Activated CD8-positive, alpha-beta T cell treated with anti-CD3 and anti-CD28 coated beads, Interleukin-2, amount 10 ng/mL, durations not matched to agents 7 days and 5 days (primary cell): ENCODE measurements at regions of chr1 and their contacts with region 1.

Region 1: GRCh38 chr1:198937231-198938031 is 298.6 kb downstream of the PTPRC start:
- DNase-seq: peak; percentile 82
- ATAC-seq: peak; percentile 92
- H3K4me3 Mint-ChIP-seq: no peak overlapping the region
- H3K27ac Mint-ChIP-seq: peak overlapping the region; percentile 88
- H3K4me1 Mint-ChIP-seq: peaks cover 21% of the 10 kb centered on the region
- H3K27me3 Mint-ChIP-seq: no peaks in the 10 kb centered on the region

Region 2: GRCh38 chr1:198919667-198920398 is 17.6 kb before region 1 on chr1:
- CTCF ChIA-PET with region 1: interaction called, 12 read pairs
- POLR2A ChIA-PET with region 1: interaction called, 24 read pairs
- DNase-seq: no peak
- ATAC-seq: peak; percentile 71
- H3K4me3 Mint-ChIP-seq: peak overlapping the region; percentile 60
- H3K27ac Mint-ChIP-seq: peak overlapping the region; percentile 79
- H3K4me1 Mint-ChIP-seq: peaks cover 81% of the 10 kb centered on the region
- H3K27me3 Mint-ChIP-seq: no peaks in the 10 kb centered on the region

Region 3: DNA sequence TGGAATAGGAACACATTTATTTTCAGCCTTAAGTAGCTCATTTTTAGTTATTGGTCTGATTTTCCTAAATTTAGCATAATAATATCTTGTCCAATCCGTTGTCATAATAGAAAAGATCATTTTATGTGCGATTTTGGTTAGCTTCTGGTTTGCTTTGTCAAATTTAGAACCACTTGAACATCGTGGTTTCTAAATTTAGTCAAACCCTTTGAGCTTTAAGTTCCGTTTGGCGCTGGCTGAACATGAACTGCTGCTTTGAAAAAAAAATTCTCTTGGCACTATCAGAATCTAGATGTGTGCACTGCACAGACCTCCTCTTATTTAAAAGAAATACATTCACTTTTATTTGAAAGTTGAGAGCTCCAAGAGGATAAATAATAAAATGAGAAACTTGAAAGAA is 72.0 kb after region 1 on chr1:
- CTCF ChIA-PET with region 1: interaction called, 3 read pairs
- POLR2A ChIA-PET with region 1: interaction called, 35 read pairs
- DNase-seq: peak; percentile 41
- ATAC-seq: peak; percentile 74
- H3K4me3 Mint-ChIP-seq: peak overlapping the region; percentile 64
- H3K27ac Mint-ChIP-seq: peak overlapping the region; percentile 86
- H3K4me1 Mint-ChIP-seq: peaks cover 47% of the 10 kb centered on the region
- H3K27me3 Mint-ChIP-seq: no peaks in the 10 kb centered on the region

Region 4: GRCh38 chr1:199041173-199041914 is 103.9 kb after region 1 on chr1:
- CTCF ChIA-PET with region 1: interaction called, 17 read pairs
- POLR2A ChIA-PET with region 1: interaction called, 45 read pairs
- DNase-seq: peak; percentile 76
- ATAC-seq: peak; percentile 88
- H3K4me3 Mint-ChIP-seq: peak overlapping the region; percentile 15
- H3K27ac Mint-ChIP-seq: peak overlapping the region; percentile 81
- H3K4me1 Mint-ChIP-seq: peaks cover 51% of the 10 kb centered on the region
- H3K27me3 Mint-ChIP-seq: no peaks in the 10 kb centered on the region

Region 5: GRCh38 chr1:199058281-199058680 is 120.8 kb after region 1 on chr1:
- CTCF ChIA-PET with region 1: no interaction called
- POLR2A ChIA-PET with region 1: no interaction called
- DNase-seq: no peak
- ATAC-seq: no peak
- H3K4me3 Mint-ChIP-seq: no peak overlapping the region
- H3K27ac Mint-ChIP-seq: no peak overlapping the region
- H3K4me1 Mint-ChIP-seq: peaks cover 4% of the 10 kb centered on the region
- H3K27me3 Mint-ChIP-seq: no peaks in the 10 kb centered on the region

Region 6: DNA sequence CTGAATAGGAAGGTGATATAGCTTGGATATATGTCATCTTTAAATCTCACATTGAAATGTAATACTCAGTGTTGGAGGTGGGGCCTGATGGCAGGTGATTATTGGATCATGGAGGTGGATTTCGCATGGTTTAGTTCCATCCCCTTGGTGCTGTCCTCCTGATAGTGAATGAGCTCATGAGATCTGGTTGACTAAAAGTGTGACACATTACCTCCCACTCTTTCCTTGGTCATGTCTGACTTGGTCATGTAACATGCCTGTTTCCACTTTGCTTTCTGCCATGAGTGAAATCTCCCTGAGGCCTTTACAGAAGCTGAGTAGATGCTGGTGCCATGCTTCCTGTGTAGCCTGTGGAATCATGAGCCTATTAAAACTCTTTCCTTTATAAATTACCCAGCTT is 425.6 kb after region 1 on chr1:
- CTCF ChIA-PET with region 1: no interaction called
- POLR2A ChIA-PET with region 1: no interaction called
- DNase-seq: no peak
- ATAC-seq: no peak
- H3K4me3 Mint-ChIP-seq: no peak overlapping the region
- H3K27ac Mint-ChIP-seq: no peak overlapping the region
- H3K4me1 Mint-ChIP-seq: no peaks in the 10 kb centered on the region
- H3K27me3 Mint-ChIP-seq: peaks cover 4% of the 10 kb centered on the region